Activated T-helper 2 cell treated with anti-CD3 and anti-CD28 coated beads, Interferon-gamma antibody, Interleukin-2, Interleukin-4, amounts not matched to agents 10 μg/mL and 5 μg/mL and 100 μg/mL, durations not matched to agents 14 hours and 24 hours and 36 hours (primary cell): ENCODE measurements at regions of chr5 and their contacts with region 1.

Region 1: DNA sequence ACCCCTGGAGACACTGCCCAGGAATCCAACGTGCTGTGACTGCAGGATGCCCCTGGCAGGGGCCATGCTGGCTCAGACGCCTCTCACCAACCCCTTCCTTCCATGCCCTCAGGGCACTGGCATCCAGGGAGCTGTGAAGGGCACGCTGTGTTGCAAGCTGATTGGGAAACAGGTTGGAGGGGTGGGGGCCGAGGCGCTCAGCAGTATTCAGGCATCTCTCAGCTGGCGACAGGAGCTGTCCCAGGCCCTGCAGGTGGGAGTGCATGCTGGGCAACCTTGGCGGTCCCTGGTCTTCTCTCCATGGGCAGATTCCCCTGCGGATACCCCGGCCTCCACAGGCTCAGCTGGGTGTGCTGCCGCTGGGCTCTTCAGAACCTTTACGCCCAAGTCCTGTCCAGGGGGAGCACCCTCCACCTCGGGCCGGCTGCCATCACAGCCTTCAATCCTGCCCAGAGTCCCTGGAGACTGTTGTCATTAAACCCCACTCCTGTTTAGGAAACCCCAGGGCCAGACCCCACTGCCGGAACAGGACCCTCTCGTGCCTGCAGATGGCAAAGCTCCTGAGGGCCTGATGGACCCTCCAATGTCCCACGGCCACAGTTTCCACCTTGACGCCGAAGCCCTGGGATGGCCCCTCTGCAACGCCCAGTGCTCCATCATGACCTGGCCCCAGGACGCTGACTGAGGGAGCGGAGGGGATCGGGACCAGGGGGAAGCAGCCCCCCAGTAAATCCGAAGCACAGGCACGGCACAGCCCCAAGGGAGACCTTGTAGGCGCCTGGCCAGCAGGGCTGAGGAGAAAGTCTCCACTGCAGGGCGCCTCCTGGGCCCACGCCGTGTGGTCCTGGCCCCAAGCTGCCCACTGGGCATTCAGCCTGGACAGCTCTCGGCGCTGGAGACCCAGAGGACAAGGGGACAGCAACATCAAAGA is 9.3 kb downstream of the TPPP start:
- DNase-seq: no peak
- H3K4me3 Mint-ChIP-seq: no peak overlapping the region
- H3K27ac Mint-ChIP-seq: no peak overlapping the region
- H3K4me1 Mint-ChIP-seq: no peaks in the 10 kb centered on the region
- H3K27me3 Mint-ChIP-seq: no peaks in the 10 kb centered on the region

Region 2: GRCh38 chr5:776792-777711 is 93.2 kb after region 1 on chr5:
- intact Hi-C with region 1: loop called (anchors 5 kb)
- DNase-seq: no peak
- H3K4me3 Mint-ChIP-seq: no peak overlapping the region
- H3K27ac Mint-ChIP-seq: no peak overlapping the region
- H3K4me1 Mint-ChIP-seq: no peaks in the 10 kb centered on the region
- H3K27me3 Mint-ChIP-seq: no peaks in the 10 kb centered on the region

Region 3: DNA sequence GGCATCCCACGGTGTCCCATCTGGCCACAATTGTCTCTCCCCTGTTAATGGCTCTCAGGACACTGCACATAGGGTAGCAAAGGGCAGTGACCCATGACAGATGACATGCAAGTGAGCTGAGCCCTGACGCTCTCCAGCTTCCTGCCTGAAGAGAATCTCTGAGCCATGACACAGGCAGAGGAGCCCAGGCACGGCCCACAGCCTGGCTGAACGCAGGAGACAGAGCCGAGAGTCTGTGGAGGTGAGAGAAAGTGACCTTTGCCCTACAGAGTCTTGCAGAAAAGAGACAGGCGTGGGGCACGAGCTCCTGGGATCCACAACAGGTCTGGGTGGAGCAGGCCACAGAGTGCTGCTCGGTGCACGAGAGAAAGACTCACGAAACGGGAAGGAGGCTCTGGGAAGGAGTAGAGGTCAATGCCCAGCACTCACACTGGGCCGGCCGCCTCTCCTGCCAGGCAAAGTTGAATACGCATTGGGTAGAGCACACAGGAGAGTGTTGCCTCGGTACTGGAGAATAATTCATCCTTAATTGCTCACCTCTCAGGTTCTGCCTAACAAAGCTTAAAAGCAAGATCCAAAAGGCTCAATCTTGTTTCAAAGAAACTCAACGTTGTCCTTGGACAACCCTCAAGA is 1025.5 kb after region 1 on chr5:
- intact Hi-C with region 1: no loop called
- DNase-seq: no peak
- H3K4me3 Mint-ChIP-seq: peak overlapping the region; percentile 41
- H3K27ac Mint-ChIP-seq: no peak overlapping the region
- H3K4me1 Mint-ChIP-seq: peaks cover 4% of the 10 kb centered on the region
- H3K27me3 Mint-ChIP-seq: peaks cover 12% of the 10 kb centered on the region